Activated CD4-positive, alpha-beta T cell treated with anti-CD3 and anti-CD28 coated beads for 36 hours (primary cell): ENCODE measurements at regions of chr12 and their contacts with region 1.

Region 1: DNA sequence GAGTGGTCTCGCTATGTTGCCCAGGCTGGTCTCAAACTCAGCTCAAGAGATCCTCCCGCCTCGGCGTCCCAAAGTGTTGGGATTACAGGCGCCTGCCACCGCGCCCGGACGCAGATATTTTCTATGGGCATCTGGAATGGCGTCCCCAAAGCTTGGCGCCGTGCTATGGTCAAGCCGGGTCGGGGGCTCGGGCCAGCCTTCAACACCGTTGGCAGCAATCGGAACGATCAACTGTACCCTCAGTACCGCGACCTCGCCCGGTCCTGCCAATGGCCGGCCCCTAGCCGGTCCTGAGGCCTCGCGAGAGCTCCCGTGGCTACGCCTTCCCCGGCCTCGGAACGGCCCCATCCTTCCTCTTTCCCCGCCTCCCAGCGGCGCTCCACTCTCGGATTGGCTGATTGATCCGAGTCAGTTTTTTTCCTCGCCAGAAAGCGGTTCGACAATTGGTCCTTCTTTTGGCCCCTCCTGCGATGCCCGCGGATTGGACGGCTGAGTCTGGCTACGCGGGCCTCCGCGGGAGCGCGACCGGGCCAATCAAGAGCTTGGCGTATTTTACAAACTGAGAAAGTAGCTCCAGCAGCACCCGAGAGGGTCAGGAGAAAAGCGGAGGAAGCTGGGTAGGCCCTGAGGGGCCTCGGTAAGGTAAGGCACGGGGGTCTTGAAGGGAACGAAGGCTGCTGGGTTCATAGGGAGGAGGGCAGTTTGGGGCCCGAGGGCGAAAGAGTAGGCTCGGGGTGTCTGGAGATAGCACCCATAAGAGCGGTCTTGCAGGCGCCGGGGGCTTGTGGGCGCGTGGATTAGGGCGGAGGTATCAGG is at the start of gene TROAP:
- DNase-seq: peak; percentile 99
- ATAC-seq: peak; percentile 96
- H3K4me3 Mint-ChIP-seq: peak within 1 kb of the TSS; percentile 95
- H3K27ac Mint-ChIP-seq: peak within 1 kb of the TSS; percentile 95
- H3K4me1 Mint-ChIP-seq: peaks cover 10% of the 10 kb centered on the region
- H3K27me3 Mint-ChIP-seq: no peaks in the 10 kb centered on the region
- total RNA-seq, gene TROAP: 64.5 to 84.3 TPM

Region 2: DNA sequence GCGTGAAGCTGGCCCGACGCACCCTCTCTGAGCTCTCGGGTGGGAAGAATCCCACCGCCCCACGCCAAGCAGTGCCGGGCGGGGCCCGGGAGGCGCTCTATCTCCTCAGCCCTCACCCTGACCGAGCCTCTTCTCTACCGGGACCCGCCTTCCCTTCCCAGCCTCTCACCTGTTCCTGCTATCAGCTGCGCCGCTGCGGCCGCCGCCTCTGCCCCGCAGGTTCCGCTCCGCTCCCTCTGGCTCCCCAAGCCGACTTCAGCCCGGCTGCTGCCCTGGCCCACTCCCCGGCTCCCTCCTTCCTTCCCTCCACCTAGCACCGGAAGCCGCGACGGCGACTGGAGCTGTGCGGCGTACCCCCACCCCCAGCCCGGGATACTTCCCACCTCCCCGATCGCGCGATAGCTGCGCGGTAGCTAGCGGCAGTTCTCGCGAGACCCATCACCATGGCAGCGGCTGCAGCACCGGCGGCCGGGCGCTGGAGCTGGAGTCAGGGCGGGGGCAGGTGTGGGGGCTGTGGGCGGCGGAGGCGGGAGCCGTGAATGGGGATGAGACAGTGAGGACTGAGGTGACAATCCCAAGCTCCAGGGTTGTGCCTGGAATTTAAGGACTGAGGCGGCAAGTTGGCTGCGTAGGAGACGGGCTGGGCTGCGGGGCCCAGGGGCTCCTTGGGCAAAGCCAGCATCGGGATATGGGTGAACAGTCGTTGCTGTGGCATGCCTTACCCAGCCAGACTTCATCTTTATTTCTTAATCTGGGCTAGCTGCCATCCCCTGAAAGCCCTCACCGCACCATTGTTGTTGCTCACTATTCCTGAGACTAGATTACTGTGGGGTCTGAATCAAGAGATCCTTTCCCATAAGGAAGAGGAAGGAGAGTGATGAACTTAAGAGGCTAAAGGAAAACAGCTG is 365.5 kb before region 1 on chr12 and contains the start of gene ARF3:
- CTCF ChIA-PET with region 1: no interaction called
- POLR2A ChIA-PET with region 1: no interaction called
- intact Hi-C with region 1: loop called in 1 of 2 experiments (anchors 2 kb)
- DNase-seq: peak; percentile 97
- ATAC-seq: peak; percentile 99
- H3K4me3 Mint-ChIP-seq: peak within 1 kb of the TSS; percentile 92
- H3K27ac Mint-ChIP-seq: peak within 1 kb of the TSS; percentile 74
- H3K4me1 Mint-ChIP-seq: peaks cover 23% of the 10 kb centered on the region
- H3K27me3 Mint-ChIP-seq: no peaks in the 10 kb centered on the region
- total RNA-seq, gene ARF3: 84.7 to 96.1 TPM

Region 3: DNA sequence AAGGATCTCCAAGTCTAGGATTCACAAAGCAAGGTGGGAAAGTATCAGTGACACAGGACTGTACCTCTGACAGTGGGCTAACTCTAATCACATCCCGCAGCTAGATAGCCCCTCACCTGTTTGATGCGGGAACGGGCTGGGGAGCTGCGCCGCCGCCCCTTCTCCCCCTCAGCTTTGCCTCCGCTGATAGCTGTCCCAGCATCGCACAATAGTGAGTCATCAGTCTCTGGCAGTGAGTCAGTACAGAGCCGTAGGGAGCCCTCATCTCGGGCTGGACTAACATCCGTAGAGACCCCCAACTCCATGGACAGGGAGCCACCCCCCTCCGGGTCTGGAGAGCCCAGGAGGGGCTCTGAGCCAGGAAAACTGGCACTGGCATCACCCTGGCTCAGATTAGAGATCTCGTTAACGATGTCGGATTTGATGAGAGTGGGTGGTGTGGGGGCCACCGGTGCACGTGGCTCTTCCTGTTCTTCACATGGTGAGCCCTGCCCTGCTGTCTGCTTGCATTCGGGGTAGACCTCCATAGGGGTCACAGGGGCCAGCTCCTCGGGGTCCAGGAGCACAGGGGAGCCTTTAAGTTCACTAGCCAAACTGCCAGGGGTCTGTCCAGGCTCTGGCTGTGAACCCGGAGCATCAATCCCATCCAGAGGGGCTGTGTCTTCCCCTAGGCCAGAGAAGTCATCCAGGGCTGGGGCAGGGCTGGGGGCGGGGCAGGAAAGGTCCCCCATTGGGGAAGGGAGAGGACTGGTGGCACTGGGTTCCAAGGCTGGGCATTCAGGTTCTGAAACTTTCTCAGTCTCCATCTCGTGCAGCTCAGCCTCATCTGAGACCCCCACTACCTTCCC is 273.1 kb before region 1 on chr12:
- CTCF ChIA-PET with region 1: no interaction called
- POLR2A ChIA-PET with region 1: no interaction called
- intact Hi-C with region 1: no loop called
- DNase-seq: no peak
- ATAC-seq: no peak
- H3K4me3 Mint-ChIP-seq: no peak overlapping the region
- H3K27ac Mint-ChIP-seq: no peak overlapping the region
- H3K4me1 Mint-ChIP-seq: peaks cover 3% of the 10 kb centered on the region
- H3K27me3 Mint-ChIP-seq: no peaks in the 10 kb centered on the region

Region 4: GRCh38 chr12:49130151-49131050 is 192.5 kb before region 1 on chr12:
- CTCF ChIA-PET with region 1: interaction called, 6 read pairs
- POLR2A ChIA-PET with region 1: interaction called, 5 read pairs
- intact Hi-C with region 1: loop called (anchors 1 to 5 kb)
- DNase-seq: peak; percentile 96
- ATAC-seq: peak; percentile 58
- H3K4me3 Mint-ChIP-seq: peak overlapping the region; percentile 99
- H3K27ac Mint-ChIP-seq: peak overlapping the region; percentile 97
- H3K4me1 Mint-ChIP-seq: peaks cover 44% of the 10 kb centered on the region
- H3K27me3 Mint-ChIP-seq: no peaks in the 10 kb centered on the region

Region 5: GRCh38 chr12:49288412-49288853 is 34.5 kb before region 1 on chr12:
- CTCF ChIA-PET with region 1: interaction called, 10 read pairs
- POLR2A ChIA-PET with region 1: interaction called, 3 read pairs
- intact Hi-C with region 1: no loop called
- DNase-seq: peak; percentile 81
- ATAC-seq: peak; percentile 80
- H3K4me3 Mint-ChIP-seq: no peak overlapping the region
- H3K27ac Mint-ChIP-seq: no peak overlapping the region
- H3K4me1 Mint-ChIP-seq: no peaks in the 10 kb centered on the region
- H3K27me3 Mint-ChIP-seq: peaks cover 22% of the 10 kb centered on the region

Region 6: DNA sequence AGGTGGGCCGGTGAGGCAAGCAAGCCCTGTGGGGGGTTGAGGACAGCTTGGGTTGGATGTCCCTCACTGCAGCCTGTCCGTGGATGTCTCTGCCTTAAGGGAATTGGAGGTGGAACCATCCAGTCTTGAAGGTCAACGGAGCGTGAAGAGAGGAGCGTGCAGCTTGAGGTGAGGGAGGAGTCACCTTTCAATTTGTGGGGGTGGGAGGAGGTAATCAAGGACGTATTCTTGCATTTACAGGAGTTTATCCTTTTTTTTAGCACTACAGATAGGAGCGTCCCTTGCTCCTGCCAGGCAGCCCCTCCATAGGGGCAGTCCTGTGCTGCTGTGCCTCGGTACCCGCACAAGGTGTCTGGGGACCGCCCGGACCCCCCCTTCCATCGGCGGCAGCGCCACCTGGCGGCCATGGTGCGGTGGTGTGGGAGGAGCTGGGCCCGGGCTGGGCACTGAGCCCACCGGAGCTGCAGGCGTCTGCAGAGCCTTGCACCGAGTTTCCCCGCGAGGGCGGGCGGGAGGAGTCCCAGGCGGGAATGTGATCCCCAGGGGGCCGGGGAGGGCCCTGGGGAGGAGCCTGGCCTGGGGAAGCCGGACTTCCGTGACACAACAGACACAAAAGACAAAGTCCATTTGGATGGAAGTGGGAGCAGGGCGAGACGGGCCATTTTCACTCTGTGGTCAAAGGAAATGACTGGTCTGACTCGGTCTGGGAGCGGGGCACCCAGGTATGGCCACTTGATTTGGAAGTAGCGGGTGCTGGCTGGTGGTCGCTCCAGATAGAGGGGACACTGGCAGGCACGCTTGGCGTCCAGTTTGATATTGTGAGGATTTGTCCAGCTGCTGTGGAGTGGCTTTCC is 24.7 kb after region 1 on chr12:
- CTCF ChIA-PET with region 1: interaction called, 27 read pairs
- POLR2A ChIA-PET with region 1: interaction called, 11 read pairs
- intact Hi-C with region 1: loop called (anchors 1 kb)
- DNase-seq: peak; percentile 84
- ATAC-seq: peak; percentile 67
- H3K4me3 Mint-ChIP-seq: peak overlapping the region; percentile 29
- H3K27ac Mint-ChIP-seq: no peak overlapping the region
- H3K4me1 Mint-ChIP-seq: peaks cover 39% of the 10 kb centered on the region
- H3K27me3 Mint-ChIP-seq: peaks cover 54% of the 10 kb centered on the region

Region 7: GRCh38 chr12:49413796-49414195 is 90.9 kb after region 1 on chr12:
- CTCF ChIA-PET with region 1: no interaction called
- POLR2A ChIA-PET with region 1: no interaction called
- intact Hi-C with region 1: no loop called
- DNase-seq: no peak
- ATAC-seq: no peak
- H3K4me3 Mint-ChIP-seq: no peak overlapping the region
- H3K27ac Mint-ChIP-seq: no peak overlapping the region
- H3K4me1 Mint-ChIP-seq: peaks cover 6% of the 10 kb centered on the region
- H3K27me3 Mint-ChIP-seq: no peaks in the 10 kb centered on the region

Region 8: GRCh38 chr12:49707128-49707811 is 384.4 kb after region 1 on chr12 and contains the start of gene FMNL3:
- CTCF ChIA-PET with region 1: interaction called, 4 read pairs
- POLR2A ChIA-PET with region 1: no interaction called
- intact Hi-C with region 1: loop called in 1 of 2 experiments (anchors 1 kb)
- DNase-seq: peak; percentile 99
- ATAC-seq: peak; percentile 92
- H3K4me3 Mint-ChIP-seq: peak within 1 kb of the TSS; percentile 92
- H3K27ac Mint-ChIP-seq: peak within 1 kb of the TSS; percentile 83
- H3K4me1 Mint-ChIP-seq: peaks cover 43% of the 10 kb centered on the region
- H3K27me3 Mint-ChIP-seq: peaks cover 5% of the 10 kb centered on the region
- total RNA-seq, gene FMNL3: 23.2 to 24.3 TPM

Region 9: DNA sequence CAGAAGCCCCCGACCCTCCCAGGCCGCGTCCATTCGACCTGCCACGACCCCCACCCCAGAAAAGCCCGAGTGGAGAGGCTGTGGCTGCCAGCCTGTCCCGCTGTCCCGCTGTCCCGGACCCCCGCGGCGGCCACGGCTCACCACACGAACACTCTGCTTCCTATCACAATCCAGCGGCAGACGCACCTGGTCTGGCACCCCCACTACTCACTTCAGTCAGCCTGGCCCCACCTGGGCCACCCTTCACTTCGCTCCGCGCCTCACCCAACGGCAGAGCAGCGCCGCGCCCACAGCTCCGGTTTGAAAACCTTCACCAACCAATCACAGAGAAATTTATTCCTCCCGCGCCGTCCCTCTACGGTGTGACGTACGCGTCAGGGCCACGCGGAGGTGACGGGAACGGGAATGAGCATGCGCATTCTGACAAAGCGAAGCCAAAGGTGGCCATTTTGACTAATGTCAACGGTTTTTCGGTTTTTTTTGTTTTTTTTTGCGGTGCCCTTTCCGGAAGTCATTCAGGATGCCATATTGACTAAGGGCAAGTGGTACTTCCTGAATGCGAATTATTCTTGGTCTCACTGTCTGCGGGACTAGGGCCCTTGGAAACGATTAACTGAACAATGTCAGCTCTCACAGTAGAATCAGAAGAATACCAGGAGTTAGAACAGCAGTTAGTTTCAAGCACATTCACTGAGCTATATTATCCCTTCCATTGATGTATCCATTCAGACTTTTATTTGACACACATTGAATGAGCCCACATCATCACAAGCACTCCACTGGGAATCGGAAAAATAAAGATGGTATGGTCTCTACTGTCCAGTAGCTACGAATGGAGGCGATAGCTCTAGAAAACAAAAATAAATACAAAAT is 702.5 kb after region 1 on chr12 and contains the start of gene RACGAP1:
- CTCF ChIA-PET with region 1: no interaction called
- POLR2A ChIA-PET with region 1: no interaction called
- intact Hi-C with region 1: loop called in 1 of 2 experiments (anchors 1 kb)
- DNase-seq: peak; percentile 97
- ATAC-seq: peak; percentile 98
- H3K4me3 Mint-ChIP-seq: peak within 1 kb of the TSS; percentile 90
- H3K27ac Mint-ChIP-seq: peak within 1 kb of the TSS; percentile 95
- H3K4me1 Mint-ChIP-seq: peaks cover 23% of the 10 kb centered on the region
- H3K27me3 Mint-ChIP-seq: no peaks in the 10 kb centered on the region
- total RNA-seq, gene RACGAP1: 99.7 to 118 TPM